Dorsolateral prefrontal cortex (tissue), 120 donors: ENCODE measurements at regions of chrX and their contacts with region 1.

Region 1: GRCh38 chrX:24241822-24242648 is 71.8 kb downstream of the SUPT20HL2 start:
- DNase-seq: no peak
- H3K4me3 ChIP-seq: no peak overlapping the region
- H3K27ac ChIP-seq: peak overlapping the region in 1 of 59 donors; percentile 26
- H3K27me3 ChIP-seq: peaks cover 0 to 59% (median 7%) of the 10 kb centered on the region in 45 donors
- CTCF ChIP-seq: peak in 55 of 56 donors; percentile 11 to 75 (median 49)

Region 2: DNA sequence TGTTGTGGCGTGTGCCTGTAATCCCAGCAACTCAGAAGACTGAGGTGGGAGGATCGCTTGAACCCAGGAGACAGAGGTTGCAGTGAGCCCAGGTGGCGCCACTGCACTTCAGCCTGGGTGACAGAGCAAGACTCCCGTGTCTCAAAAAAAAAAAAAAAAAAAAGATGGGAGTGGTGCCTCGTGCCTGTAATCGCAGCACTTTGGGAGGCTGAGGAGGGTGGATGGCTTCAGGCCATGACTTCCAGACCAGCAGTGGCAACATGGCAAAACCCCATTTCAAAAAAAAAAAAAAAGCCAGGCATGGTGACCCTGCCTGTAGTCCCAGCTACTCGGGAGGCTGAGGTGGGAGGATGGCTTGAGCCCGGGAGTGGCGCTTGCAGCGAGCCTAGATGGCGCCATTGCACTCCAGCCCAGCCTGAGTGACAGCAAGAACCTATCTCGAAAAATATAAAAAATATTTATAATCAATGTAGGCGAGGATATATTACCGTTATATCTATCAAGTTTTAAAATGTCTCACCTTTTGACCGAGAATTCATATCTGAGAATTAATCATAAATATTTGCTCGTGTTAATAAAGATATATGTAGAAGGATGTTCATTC is 160.3 kb before region 1 on chrX:
- intact Hi-C with region 1: loop called in 1 of 2 experiments (anchors 10 kb)
- DNase-seq: peak in 9 of 10 donors; percentile 5 to 60 (median 37)
- H3K4me3 ChIP-seq: peak overlapping the region in 5 of 59 donors; percentile 14 to 31 (median 21)
- H3K27ac ChIP-seq: no peak overlapping the region
- H3K27me3 ChIP-seq: no peaks in the 10 kb centered on the region
- CTCF ChIP-seq: peak in 49 of 56 donors; percentile 4 to 70 (median 42)

Region 3: DNA sequence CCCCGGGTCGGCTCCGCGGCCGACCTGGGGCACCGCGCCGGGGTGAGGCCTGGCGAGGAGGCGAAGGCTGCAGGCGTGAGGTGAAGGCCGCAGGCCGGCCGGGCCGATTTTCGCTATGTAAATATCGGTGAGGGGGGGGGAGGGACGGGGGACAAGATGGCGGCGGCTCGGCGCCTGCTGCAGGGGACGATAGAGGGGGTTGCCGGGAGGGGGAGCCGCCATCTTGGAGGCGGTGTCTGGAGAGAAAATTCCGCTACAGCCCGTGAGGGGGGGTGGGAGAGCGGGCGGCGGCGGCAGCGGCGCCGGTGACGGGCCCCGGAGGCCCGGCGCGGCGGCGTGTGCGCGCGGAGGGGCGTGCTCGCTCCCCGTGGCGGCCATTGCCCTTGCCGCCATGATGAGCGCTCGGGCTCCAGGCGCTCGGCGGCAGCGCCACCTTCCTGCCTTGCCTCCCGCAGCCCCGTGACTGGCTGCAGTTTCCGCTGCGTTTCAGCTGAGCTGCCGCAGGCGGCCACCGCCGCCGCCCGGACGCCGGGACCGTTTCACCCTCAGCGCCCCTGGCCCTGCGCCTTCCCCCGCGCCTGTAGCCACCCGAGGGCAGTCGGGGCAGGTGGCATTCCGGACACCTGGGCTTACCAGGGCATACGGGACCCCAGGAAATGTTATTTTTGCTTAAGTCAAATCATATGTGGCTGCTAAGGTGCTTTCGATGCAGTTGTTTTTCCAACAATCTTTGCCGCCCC is 91.8 kb before region 1 on chrX:
- intact Hi-C with region 1: loop called in 1 of 2 experiments (anchors 10 kb)
- DNase-seq: peak; percentile 79 to 93 (median 90)
- H3K4me3 ChIP-seq: peak overlapping the region; percentile 43 to 99 (median 86)
- H3K27ac ChIP-seq: peak overlapping the region; percentile 92 to 100 (median 99)
- H3K27me3 ChIP-seq: no peaks in the 10 kb centered on the region
- CTCF ChIP-seq: peak in 54 of 56 donors; percentile 26 to 85 (median 66)